Activated naive CD4-positive, alpha-beta T cell treated with anti-CD3 and anti-CD28 coated beads for 36 hours (primary cell): ENCODE measurements at regions of chr9 and their contacts with region 1.

Region 1: DNA sequence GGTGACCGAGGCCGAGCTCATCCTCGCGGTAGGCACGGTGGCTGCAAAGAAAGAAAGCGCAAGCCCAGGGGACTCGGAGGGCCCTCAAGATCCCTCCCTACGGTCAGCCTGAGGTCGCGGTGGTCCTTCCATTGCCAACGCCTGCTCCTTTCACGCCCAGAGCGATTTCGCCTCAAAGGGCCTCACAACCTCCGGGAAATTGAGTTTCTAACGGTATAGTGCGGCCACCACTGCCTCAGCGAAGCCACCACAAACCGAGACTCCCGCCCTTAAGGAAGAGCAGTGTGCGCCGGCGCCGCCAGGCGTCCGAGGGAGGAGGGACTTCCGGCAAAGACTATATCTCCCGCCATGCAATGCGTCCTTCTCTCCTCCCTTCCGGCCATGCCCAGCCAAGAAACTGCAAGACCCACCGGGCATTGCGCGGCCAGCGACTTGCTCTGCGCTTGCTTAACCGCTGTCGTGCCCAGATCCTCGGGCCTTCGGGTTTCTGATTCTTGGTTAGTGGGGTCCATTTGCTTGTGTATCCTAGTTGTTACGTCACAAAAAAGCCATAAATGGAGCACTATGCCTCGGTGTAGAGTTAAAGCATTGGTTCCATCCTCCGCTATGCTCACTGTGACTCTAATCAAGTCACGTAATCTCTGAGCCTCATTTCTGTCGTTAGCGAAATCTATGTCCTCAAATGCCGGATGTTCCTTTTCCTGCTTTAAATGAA is at the start of gene HAUS6:
- DNase-seq: peak; percentile 97
- H3K4me3 Mint-ChIP-seq: peak within 1 kb of the TSS; percentile 94
- H3K27ac Mint-ChIP-seq: peak within 1 kb of the TSS; percentile 93
- H3K4me1 Mint-ChIP-seq: peaks cover 22% of the 10 kb centered on the region
- H3K27me3 Mint-ChIP-seq: no peaks in the 10 kb centered on the region
- total RNA-seq, gene HAUS6: 23.6 to 24.1 TPM

Region 2: GRCh38 chr9:18861609-18862544 is 240.9 kb before region 1 on chr9:
- CTCF ChIA-PET with region 1: no interaction called
- intact Hi-C with region 1: no loop called
- DNase-seq: no peak
- H3K4me3 Mint-ChIP-seq: no peak overlapping the region
- H3K27ac Mint-ChIP-seq: no peak overlapping the region
- H3K4me1 Mint-ChIP-seq: no peaks in the 10 kb centered on the region
- H3K27me3 Mint-ChIP-seq: peaks cover 2% of the 10 kb centered on the region

Region 3: GRCh38 chr9:19085295-19085694 is 17.5 kb before region 1 on chr9:
- CTCF ChIA-PET with region 1: interaction called, 6 read pairs
- intact Hi-C with region 1: loop called (anchors 2 kb)
- DNase-seq: no peak
- H3K4me3 Mint-ChIP-seq: no peak overlapping the region
- H3K27ac Mint-ChIP-seq: no peak overlapping the region
- H3K4me1 Mint-ChIP-seq: no peaks in the 10 kb centered on the region
- H3K27me3 Mint-ChIP-seq: no peaks in the 10 kb centered on the region

Region 4: GRCh38 chr9:19127881-19128500 is 25.2 kb after region 1 on chr9:
- CTCF ChIA-PET with region 1: interaction called, 6 read pairs
- intact Hi-C with region 1: loop called (anchors 1 kb)
- DNase-seq: peak; percentile 45
- H3K4me3 Mint-ChIP-seq: peak overlapping the region; percentile 92
- H3K27ac Mint-ChIP-seq: peak overlapping the region; percentile 91
- H3K4me1 Mint-ChIP-seq: peaks cover 53% of the 10 kb centered on the region
- H3K27me3 Mint-ChIP-seq: no peaks in the 10 kb centered on the region

Region 5: GRCh38 chr9:19161257-19162025 is 58.7 kb after region 1 on chr9:
- CTCF ChIA-PET with region 1: no interaction called
- intact Hi-C with region 1: loop called (anchors 1 kb)
- DNase-seq: peak; percentile 87
- H3K4me3 Mint-ChIP-seq: no peak overlapping the region
- H3K27ac Mint-ChIP-seq: peak overlapping the region; percentile 81
- H3K4me1 Mint-ChIP-seq: peaks cover 23% of the 10 kb centered on the region
- H3K27me3 Mint-ChIP-seq: no peaks in the 10 kb centered on the region

Region 6: GRCh38 chr9:19184144-19184917 is 81.5 kb after region 1 on chr9:
- CTCF ChIA-PET with region 1: no interaction called
- intact Hi-C with region 1: loop called (anchors 1 kb)
- DNase-seq: peak; percentile 92
- H3K4me3 Mint-ChIP-seq: peak overlapping the region; percentile 47
- H3K27ac Mint-ChIP-seq: peak overlapping the region; percentile 89
- H3K4me1 Mint-ChIP-seq: peaks cover 14% of the 10 kb centered on the region
- H3K27me3 Mint-ChIP-seq: no peaks in the 10 kb centered on the region

Region 7: DNA sequence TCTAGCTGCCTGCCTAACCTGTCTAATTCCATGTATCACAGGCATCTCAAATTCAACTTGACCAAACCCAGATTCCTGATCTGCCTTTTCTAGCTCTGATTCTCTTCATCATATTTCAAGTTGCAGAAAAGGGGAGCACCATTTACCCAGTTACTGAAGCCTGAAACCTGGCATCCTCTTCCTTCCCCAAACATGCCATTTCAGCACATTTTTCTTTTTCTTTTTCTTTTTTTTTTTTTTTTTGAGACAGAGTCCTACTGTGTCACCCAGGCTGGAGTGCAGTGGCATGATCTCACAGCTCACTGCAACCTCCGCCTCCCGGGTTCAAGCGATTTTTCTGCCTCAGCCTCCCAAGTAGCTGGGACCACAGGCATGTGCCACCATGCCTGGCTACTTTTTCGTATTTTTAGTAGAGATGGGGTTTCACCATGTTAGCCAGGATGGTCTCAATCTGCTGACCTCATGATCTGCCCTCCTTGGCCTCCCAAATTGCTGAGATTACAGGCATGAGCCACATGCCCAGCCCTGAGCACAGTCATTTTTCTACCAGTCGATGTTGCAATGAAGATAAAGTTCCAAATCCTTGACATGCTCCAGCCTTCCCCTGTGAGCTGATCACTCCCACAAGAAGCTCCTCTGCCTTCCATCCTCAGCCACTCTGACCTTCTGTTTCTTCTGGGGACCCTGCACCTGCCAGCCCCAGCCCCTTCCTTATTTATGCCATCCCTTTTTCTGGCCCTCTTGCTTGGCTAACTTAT is 338.2 kb after region 1 on chr9:
- CTCF ChIA-PET with region 1: no interaction called
- intact Hi-C with region 1: no loop called
- DNase-seq: no peak
- H3K4me3 Mint-ChIP-seq: peak overlapping the region; percentile 45
- H3K27ac Mint-ChIP-seq: peak overlapping the region; percentile 40
- H3K4me1 Mint-ChIP-seq: peaks cover 17% of the 10 kb centered on the region
- H3K27me3 Mint-ChIP-seq: no peaks in the 10 kb centered on the region